CD4-positive, alpha-beta T cell (primary cell): ENCODE measurements at regions of chr16 and their contacts with region 1.

Region 1: DNA sequence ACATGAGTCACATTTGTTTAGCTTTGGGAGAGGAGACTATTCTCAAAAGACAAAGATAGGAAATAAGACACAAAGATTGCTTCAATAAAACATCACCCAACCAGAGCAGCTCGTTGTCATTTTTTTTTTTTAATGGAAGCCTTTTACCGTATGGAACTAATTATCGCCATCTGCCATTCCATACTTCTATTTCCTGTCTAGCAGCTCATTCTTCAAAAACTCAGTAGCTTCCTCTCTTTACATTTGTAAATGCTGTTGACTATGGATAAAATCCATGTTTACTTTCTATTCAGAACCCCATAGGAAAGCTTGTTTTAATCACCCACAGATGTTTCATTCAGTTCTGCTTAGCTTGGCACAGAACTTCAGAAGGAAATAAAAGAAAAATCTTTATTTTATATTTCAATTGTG is 110.0 kb upstream of the PSMD7 start:
- DNase-seq: no peak
- ATAC-seq: no peak
- H3K4me3 ChIP-seq: no peak overlapping the region
- H3K4me3 Mint-ChIP-seq: no peak overlapping the region
- H3K27ac ChIP-seq: no peak overlapping the region
- H3K27ac Mint-ChIP-seq: no peak overlapping the region
- H3K4me1 ChIP-seq: no peaks in the 10 kb centered on the region
- H3K4me1 Mint-ChIP-seq: no peaks in the 10 kb centered on the region
- H3K27me3 ChIP-seq: peaks cover 0 to 2% of the 10 kb centered on the region in 2 experiments
- H3K27me3 Mint-ChIP-seq: peaks cover 21% of the 10 kb centered on the region
- CTCF ChIP-seq: no peak

Region 2: DNA sequence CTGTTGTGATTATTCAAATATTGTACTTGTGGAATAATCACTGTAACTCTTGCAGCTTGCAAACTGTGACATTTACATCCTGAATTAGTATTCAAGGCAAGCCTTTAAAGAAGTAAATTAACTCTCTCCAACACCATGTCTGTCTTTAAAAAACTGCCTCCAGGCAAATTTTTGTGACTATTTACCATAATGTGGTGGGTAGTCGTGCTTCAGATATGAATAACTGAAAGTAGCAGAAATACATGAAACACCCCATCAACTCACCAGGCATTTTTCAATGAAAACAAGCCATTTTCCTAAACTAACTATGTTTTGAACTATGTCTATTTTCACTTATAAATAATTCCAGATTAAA is 107.4 kb before region 1 on chr16:
- CTCF ChIA-PET with region 1: no interaction called
- POLR2A ChIA-PET with region 1: no interaction called
- intact Hi-C with region 1: no loop called
- DNase-seq: no peak
- ATAC-seq: no peak
- H3K4me3 ChIP-seq: no peak overlapping the region
- H3K4me3 Mint-ChIP-seq: no peak overlapping the region
- H3K27ac ChIP-seq: no peak overlapping the region
- H3K27ac Mint-ChIP-seq: no peak overlapping the region
- H3K4me1 ChIP-seq: no peaks in the 10 kb centered on the region
- H3K4me1 Mint-ChIP-seq: no peaks in the 10 kb centered on the region
- H3K27me3 ChIP-seq: no peaks in the 10 kb centered on the region
- H3K27me3 Mint-ChIP-seq: no peaks in the 10 kb centered on the region
- CTCF ChIP-seq: no peak

Region 3: DNA sequence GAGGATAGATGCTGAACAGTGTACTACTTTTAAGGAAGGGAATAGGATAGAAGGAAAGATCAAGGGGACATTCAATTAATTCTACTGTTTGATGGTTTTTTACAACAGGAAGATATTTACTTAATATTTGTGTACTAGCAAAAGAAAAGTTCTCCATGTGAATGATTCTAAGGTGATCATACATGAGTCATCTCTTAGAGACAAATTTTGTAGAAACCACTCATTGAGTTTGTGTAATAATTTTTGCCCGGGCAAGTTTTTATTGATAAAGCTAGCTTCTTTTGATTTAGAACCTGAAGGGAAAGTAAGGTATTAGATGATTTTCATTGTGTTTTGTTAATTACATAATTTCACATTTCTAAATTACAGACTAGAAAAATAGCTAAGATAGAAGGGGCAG is 62.7 kb before region 1 on chr16:
- CTCF ChIA-PET with region 1: no interaction called
- POLR2A ChIA-PET with region 1: no interaction called
- intact Hi-C with region 1: loop called in 1 of 2 experiments (anchors 10 kb)
- DNase-seq: no peak
- ATAC-seq: no peak
- H3K4me3 ChIP-seq: no peak overlapping the region
- H3K4me3 Mint-ChIP-seq: no peak overlapping the region
- H3K27ac ChIP-seq: no peak overlapping the region
- H3K27ac Mint-ChIP-seq: no peak overlapping the region
- H3K4me1 ChIP-seq: no peaks in the 10 kb centered on the region
- H3K4me1 Mint-ChIP-seq: no peaks in the 10 kb centered on the region
- H3K27me3 ChIP-seq: no peaks in the 10 kb centered on the region
- H3K27me3 Mint-ChIP-seq: peaks cover 5% of the 10 kb centered on the region
- CTCF ChIP-seq: no peak

Region 4: DNA sequence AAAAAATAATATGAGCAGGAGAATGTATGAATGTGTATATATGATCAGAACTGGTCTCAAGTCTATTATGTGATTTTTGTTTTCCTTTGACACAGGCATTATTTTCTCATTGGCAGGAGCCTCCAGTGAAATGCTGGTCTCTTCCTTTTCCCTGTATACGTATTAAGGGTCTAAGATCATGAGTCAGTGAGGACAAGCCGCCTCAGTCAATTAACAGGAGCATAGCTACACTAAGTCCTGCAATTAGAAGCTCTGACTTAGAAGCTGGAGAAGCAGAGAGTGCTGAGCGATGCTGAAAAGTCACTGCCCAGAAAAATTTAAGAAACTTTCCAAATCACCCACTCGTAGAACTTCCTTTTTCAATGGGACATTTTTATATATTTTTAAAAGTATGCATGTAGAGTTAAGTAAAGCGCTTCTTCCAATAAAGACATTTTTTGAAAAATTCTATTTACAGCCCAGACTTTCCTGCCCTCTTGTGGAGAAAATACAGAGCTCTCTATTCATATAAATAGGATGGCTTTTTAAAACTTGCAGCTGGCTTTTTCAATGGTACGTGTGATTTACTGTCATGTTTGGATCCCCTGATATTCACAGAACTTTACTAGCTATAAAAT is 39.9 kb after region 1 on chr16:
- CTCF ChIA-PET with region 1: no interaction called
- POLR2A ChIA-PET with region 1: no interaction called
- intact Hi-C with region 1: no loop called
- DNase-seq: no peak
- ATAC-seq: no peak
- H3K4me3 ChIP-seq: no peak overlapping the region
- H3K4me3 Mint-ChIP-seq: no peak overlapping the region
- H3K27ac ChIP-seq: no peak overlapping the region
- H3K27ac Mint-ChIP-seq: no peak overlapping the region
- H3K4me1 ChIP-seq: no peaks in the 10 kb centered on the region
- H3K4me1 Mint-ChIP-seq: no peaks in the 10 kb centered on the region
- H3K27me3 ChIP-seq: no peaks in the 10 kb centered on the region
- H3K27me3 Mint-ChIP-seq: peaks cover 7% of the 10 kb centered on the region
- CTCF ChIP-seq: no peak

Region 5: GRCh38 chr16:74466872-74467271 is 280.3 kb after region 1 on chr16:
- CTCF ChIA-PET with region 1: no interaction called
- POLR2A ChIA-PET with region 1: no interaction called
- intact Hi-C with region 1: no loop called
- DNase-seq: peak in 1 of 14 experiments; percentile 18
- ATAC-seq: peak; percentile 26
- H3K4me3 ChIP-seq: no peak overlapping the region
- H3K4me3 Mint-ChIP-seq: no peak overlapping the region
- H3K27ac ChIP-seq: no peak overlapping the region
- H3K27ac Mint-ChIP-seq: peak overlapping the region; percentile 85
- H3K4me1 ChIP-seq: peaks cover 11% of the 10 kb centered on the region
- H3K4me1 Mint-ChIP-seq: peaks cover 18% of the 10 kb centered on the region
- H3K27me3 ChIP-seq: no peaks in the 10 kb centered on the region
- H3K27me3 Mint-ChIP-seq: no peaks in the 10 kb centered on the region
- CTCF ChIP-seq: no peak